T-cell (primary cell): ENCODE measurements at regions of chr2 and their contacts with region 1.

Region 1: GRCh38 chr2:25794544-25795276 is 83.6 kb downstream of the ASXL2 start:
- DNase-seq: peak in 2 of 35 experiments; percentile 5 to 60
- ATAC-seq: peak; percentile 84 to 93 (median 90)
- H3K4me3 ChIP-seq: peak overlapping the region in 1 of 2 donors; percentile 18
- H3K4me3 Mint-ChIP-seq: peak overlapping the region; percentile 74 to 81 (median 79)
- H3K27ac ChIP-seq: peak overlapping the region; percentile 78
- H3K27ac Mint-ChIP-seq: peak overlapping the region; percentile 94 to 98
- H3K4me1 ChIP-seq: peaks cover 33 to 38% of the 10 kb centered on the region in 2 experiments
- H3K4me1 Mint-ChIP-seq: peaks cover 78 to 85% (median 85%) of the 10 kb centered on the region in 3 donors
- H3K27me3 ChIP-seq: no peaks in the 10 kb centered on the region
- H3K27me3 Mint-ChIP-seq: no peaks in the 10 kb centered on the region

Region 2: GRCh38 chr2:25700221-25700660 is 94.5 kb before region 1 on chr2:
- CTCF ChIA-PET with region 1: no interaction called
- POLR2A ChIA-PET with region 1: interaction called, 11 to 12 read pairs
- DNase-seq: peak in 18 of 35 experiments; percentile 4 to 55 (median 12)
- ATAC-seq: peak; percentile 45 to 56 (median 46)
- H3K4me3 ChIP-seq: no peak overlapping the region
- H3K4me3 Mint-ChIP-seq: no peak overlapping the region
- H3K27ac ChIP-seq: no peak overlapping the region
- H3K27ac Mint-ChIP-seq: no peak overlapping the region
- H3K4me1 ChIP-seq: no peaks in the 10 kb centered on the region
- H3K4me1 Mint-ChIP-seq: peaks cover 0 to 4% (median 3%) of the 10 kb centered on the region in 3 donors
- H3K27me3 ChIP-seq: peaks cover 0 to 4% of the 10 kb centered on the region in 2 experiments
- H3K27me3 Mint-ChIP-seq: no peaks in the 10 kb centered on the region

Region 3: DNA sequence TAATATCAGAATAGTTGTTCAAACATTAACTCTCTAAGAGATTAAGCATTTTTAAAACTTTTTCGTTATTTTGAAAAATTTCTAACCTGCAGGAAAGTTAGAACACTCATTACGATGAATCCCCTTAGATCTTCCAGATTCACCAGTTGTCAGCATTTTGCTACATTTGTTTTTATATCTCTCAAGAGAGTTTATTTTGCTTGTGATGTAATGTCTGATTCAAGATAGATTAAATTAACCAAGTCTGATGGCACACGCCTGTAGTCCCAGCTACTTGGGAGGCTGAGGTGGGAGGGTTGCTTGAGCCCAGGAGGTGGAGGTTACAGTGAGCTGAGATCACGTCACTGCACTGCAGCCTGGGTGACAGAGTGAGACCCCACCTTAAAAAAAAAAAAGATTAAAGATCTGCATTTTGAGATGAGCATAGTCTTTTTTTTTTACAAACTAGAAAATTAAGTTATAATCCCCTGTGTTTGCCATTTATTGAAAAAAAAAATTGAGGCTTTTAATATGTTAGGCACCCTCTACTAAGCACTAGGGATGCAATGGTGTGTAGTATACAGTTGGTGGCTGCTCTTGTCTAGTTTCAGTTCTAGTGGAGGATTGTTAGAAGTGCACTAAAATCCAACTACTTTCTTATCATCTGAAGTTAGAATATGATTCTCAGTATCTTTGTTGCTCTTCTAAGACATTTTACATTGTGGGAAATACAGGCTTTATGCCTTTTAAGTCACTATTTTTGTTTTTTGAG is 260.1 kb after region 1 on chr2:
- CTCF ChIA-PET with region 1: interaction called in 1 of 2 experiments, 10 read pairs
- POLR2A ChIA-PET with region 1: no interaction called
- DNase-seq: no peak
- ATAC-seq: peak in 1 of 4 experiments; percentile 49
- H3K4me3 ChIP-seq: no peak overlapping the region
- H3K4me3 Mint-ChIP-seq: no peak overlapping the region
- H3K27ac ChIP-seq: no peak overlapping the region
- H3K27ac Mint-ChIP-seq: no peak overlapping the region
- H3K4me1 ChIP-seq: peaks cover 3 to 26% of the 10 kb centered on the region in 2 experiments
- H3K4me1 Mint-ChIP-seq: peaks cover 75 to 80% (median 77%) of the 10 kb centered on the region in 3 donors
- H3K27me3 ChIP-seq: no peaks in the 10 kb centered on the region
- H3K27me3 Mint-ChIP-seq: no peaks in the 10 kb centered on the region